ENCODE measurements at regions of chr21 and their contacts with region 1.

Region 1: GRCh38 chr21:45140346-45140940 is 66.1 kb downstream of the ADARB1 start:
- DNase-seq: peak; percentile 46
- ATAC-seq: peak; percentile 97
- H3K4me3 Mint-ChIP-seq: no peak overlapping the region
- H3K27ac Mint-ChIP-seq: no peak overlapping the region
- H3K4me1 Mint-ChIP-seq: peaks cover 15% of the 10 kb centered on the region
- H3K27me3 Mint-ChIP-seq: no peaks in the 10 kb centered on the region
- CTCF ChIP-seq: no peak

Region 2: DNA sequence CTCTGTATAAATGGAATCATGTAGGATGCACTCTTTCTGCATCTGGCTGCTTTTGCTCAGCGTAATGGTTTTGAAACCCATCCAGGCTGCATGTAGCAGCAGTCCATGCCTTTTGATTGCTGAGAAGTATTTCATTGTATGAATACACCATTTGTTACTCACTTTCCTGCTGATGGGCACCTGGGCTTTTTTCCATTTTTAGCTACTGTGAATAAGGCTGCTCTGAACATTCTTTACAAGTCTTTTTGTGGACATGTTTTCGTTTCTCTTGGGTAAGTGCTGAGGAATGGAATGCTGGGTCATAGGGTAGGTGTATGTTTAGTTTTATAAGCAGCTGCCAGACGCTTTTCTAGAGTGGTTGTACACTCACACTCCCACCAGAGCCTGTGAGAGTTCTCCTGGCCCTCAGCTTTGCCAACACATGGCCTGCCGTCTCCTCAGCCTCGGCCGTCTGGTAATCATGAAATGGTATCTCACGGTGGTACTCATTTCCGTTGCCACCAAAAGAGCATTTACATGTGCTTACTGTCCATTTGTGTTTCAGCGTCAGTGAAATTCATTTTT is 178.0 kb before region 1 on chr21:
- CTCF ChIA-PET with region 1: interaction called, 23 read pairs
- POLR2A ChIA-PET with region 1: no interaction called
- intact Hi-C with region 1: no loop called
- DNase-seq: no peak
- ATAC-seq: no peak
- H3K4me3 Mint-ChIP-seq: no peak overlapping the region
- H3K27ac Mint-ChIP-seq: no peak overlapping the region
- H3K4me1 Mint-ChIP-seq: peaks cover 16% of the 10 kb centered on the region
- H3K27me3 Mint-ChIP-seq: no peaks in the 10 kb centered on the region
- CTCF ChIP-seq: no peak

Region 3: DNA sequence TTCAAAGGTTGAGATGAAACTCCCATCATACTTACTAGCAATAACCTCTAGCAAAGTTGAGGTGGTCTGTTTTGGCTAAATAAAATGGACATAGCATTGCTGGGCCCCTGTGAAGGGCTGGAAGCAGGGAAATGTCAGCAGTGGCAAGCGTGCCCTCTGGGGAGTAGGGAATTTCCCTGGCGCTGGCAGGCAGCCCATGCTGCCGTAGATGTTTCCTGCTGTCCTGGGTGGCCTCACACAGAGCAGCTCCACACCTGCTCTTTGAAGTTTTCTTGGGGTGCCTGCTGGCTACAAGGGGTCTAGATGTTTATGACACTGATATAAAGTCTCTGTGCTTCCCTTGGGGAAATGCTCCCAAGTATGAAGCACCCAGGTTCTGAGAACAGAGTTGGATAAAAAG is 35.9 kb before region 1 on chr21:
- CTCF ChIA-PET with region 1: interaction called, 20 read pairs
- POLR2A ChIA-PET with region 1: interaction called, 3 read pairs
- intact Hi-C with region 1: no loop called
- DNase-seq: peak; percentile 41
- ATAC-seq: peak; percentile 73
- H3K4me3 Mint-ChIP-seq: peak overlapping the region; percentile 72
- H3K27ac Mint-ChIP-seq: peak overlapping the region; percentile 74
- H3K4me1 Mint-ChIP-seq: peaks cover 91% of the 10 kb centered on the region
- H3K27me3 Mint-ChIP-seq: no peaks in the 10 kb centered on the region
- CTCF ChIP-seq: no peak

Region 4: GRCh38 chr21:45330075-45330781 is 189.8 kb after region 1 on chr21:
- CTCF ChIA-PET with region 1: no interaction called
- POLR2A ChIA-PET with region 1: no interaction called
- intact Hi-C with region 1: no loop called
- DNase-seq: no peak
- ATAC-seq: no peak
- H3K4me3 Mint-ChIP-seq: no peak overlapping the region
- H3K27ac Mint-ChIP-seq: no peak overlapping the region
- H3K4me1 Mint-ChIP-seq: peaks cover 2% of the 10 kb centered on the region
- H3K27me3 Mint-ChIP-seq: no peaks in the 10 kb centered on the region
- CTCF ChIP-seq: no peak

Region 5: GRCh38 chr21:45439161-45439872 is 298.9 kb after region 1 on chr21:
- CTCF ChIA-PET with region 1: interaction called, 20 read pairs
- POLR2A ChIA-PET with region 1: no interaction called
- intact Hi-C with region 1: no loop called
- DNase-seq: peak; percentile 81
- ATAC-seq: peak; percentile 83
- H3K4me3 Mint-ChIP-seq: peak overlapping the region; percentile 66
- H3K27ac Mint-ChIP-seq: no peak overlapping the region
- H3K4me1 Mint-ChIP-seq: peaks cover 4% of the 10 kb centered on the region
- H3K27me3 Mint-ChIP-seq: peaks cover 15% of the 10 kb centered on the region
- CTCF ChIP-seq: no peak